Left cardiac atrium (tissue), 4 donors: ENCODE measurements at regions of chr4 and their contacts with region 1.

Region 1: DNA sequence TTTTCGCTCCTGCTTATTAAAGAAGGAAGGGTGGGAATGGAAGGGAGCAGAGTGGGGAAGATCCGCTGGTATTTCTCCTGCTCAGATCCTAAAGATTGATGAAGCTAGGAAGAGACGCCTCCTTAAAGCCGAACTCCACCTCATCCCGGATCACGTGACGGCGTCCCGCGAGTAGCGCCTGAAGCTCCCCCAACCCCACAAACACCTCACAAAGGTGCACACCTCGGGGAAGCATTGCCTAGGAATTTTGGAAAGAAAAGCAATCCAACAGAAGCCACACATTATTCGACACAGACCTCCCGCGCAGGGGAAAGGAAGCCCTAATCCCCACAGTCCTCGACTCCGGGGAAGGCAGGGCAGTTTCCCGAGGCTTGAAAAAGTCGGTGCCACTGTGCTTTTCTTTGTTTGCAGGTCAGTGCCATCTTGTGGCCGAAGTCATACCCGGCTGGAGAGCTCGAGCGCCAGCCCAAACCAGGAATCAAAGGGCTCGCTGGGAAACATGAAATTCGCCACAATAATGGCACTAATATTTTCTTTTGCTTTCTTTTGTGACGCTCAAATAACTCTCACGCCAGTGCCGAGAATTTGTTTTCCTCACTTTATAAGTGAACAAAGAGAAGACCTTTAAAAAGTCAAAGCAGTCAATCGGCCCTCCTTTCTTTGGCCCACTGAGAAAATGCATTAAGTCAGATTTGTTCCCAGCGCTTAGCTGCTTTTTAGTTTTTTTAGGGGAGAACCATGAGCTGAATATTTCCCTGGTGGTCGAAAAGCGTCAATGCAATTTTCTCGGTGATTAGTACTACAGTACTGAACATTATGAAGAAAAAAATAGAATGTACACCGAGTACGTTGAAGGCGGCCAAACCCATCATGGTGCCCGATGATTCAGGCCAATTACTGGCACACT is at the start of gene NPY1R:
- DNase-seq: peak; percentile 76
- ATAC-seq: peak; percentile 93
- total RNA-seq, gene NPY1R: 2.8 to 2.9 TPM

Region 2: GRCh38 chr4:162497564-162498167 is 835.1 kb before region 1 on chr4:
- intact Hi-C with region 1: loop called in 1 of 2 experiments (anchors 2 kb)
- DNase-seq: no peak
- ATAC-seq: peak; percentile 75 to 88

Region 3: GRCh38 chr4:162645381-162645780 is 687.4 kb before region 1 on chr4:
- intact Hi-C with region 1: loop called in 1 of 2 experiments (anchors 5 kb)
- DNase-seq: no peak
- ATAC-seq: no peak

Region 4: DNA sequence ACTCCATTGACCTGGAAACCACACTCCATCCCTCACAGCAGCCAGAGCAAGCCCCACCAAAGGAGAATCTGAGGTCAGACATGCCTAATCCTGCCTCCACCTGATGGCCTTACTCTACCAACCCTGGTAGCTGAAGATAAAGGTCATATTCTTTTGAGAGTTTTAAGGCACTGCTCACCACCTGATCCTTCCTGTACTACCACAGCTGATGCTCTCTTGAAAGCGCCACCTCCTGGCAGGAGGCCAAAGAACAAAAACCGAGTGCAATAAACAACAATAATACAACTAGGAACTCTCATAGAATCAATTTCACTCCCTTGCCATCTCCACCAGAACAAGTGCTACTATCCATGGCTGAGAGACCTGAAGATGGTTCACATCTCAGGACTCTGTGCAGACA is 467.7 kb before region 1 on chr4:
- intact Hi-C with region 1: no loop called
- DNase-seq: no peak
- ATAC-seq: no peak

Region 5: DNA sequence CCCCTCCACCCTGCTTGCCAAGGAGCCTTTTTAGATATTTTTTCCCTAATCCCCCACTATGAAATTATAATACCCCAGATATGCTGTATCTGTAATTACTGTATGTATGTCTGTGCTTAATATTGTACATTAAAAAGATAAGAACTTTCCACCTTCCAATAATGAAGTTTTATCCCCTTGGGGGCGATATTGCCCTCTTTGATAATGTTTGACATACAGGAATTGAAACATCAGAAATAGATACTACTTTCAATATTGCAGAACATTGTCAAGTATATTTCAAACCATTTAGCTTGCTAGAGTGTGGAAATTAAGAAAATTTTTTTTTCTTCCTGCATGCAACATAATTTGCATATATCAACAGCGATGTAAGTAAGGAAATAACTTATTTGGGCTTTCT is 225.0 kb before region 1 on chr4:
- intact Hi-C with region 1: loop called in 1 of 2 experiments (anchors 10 kb)
- DNase-seq: no peak
- ATAC-seq: no peak